ENCODE measurements at regions of chr12 and their contacts with region 1.

Region 1: GRCh38 chr12:120437754-120438494 is at the start of gene COX6A1:
- DNase-seq: peak; percentile 96 to 98
- ATAC-seq: peak; percentile 98 to 100
- H3K4me3 ChIP-seq: peak within 1 kb of the TSS; percentile 74 to 92 (median 84)
- H3K27ac ChIP-seq: peak within 1 kb of the TSS; percentile 82 to 98 (median 89)
- H3K4me1 ChIP-seq: peaks cover 16 to 21% of the 10 kb centered on the region in 2 donors
- H3K27me3 ChIP-seq: no peaks in the 10 kb centered on the region
- CTCF ChIP-seq: peak in 1 of 5 experiments; percentile 20
- POLR2A ChIP-seq: peak; percentile 61 to 72
- total RNA-seq, gene COX6A1: 46.9 to 90.8 (median 74.3) TPM

Region 2: GRCh38 chr12:120317224-120318105 is 120.5 kb before region 1 on chr12:
- in situ Hi-C with region 1: loop called in 1 of 4 experiments (anchors 10 kb)
- intact Hi-C with region 1: loop called (anchors 5 kb)
- DNase-seq: peak; percentile 99 to 100
- ATAC-seq: peak; percentile 99
- H3K4me3 ChIP-seq: peak overlapping the region; percentile 67 to 81 (median 73)
- H3K27ac ChIP-seq: peak overlapping the region; percentile 92 to 96 (median 94)
- H3K4me1 ChIP-seq: peaks cover 3 to 7% of the 10 kb centered on the region in 2 donors
- H3K27me3 ChIP-seq: no peaks in the 10 kb centered on the region
- CTCF ChIP-seq: peak; percentile 55 to 70 (median 62)
- POLR2A ChIP-seq: peak; percentile 78 to 86

Region 3: GRCh38 chr12:120327593-120327992 is 110.3 kb before region 1 on chr12 and contains the start of gene PLA2G1B:
- in situ Hi-C with region 1: loop called in 1 of 4 experiments (anchors 10 kb)
- intact Hi-C with region 1: loop called (anchors 5 kb)
- DNase-seq: no peak
- ATAC-seq: no peak
- H3K4me3 ChIP-seq: no peak within 1 kb of the TSS
- H3K27ac ChIP-seq: no peak within 1 kb of the TSS
- H3K4me1 ChIP-seq: peaks cover 0 to 5% of the 10 kb centered on the region in 2 donors
- H3K27me3 ChIP-seq: no peaks in the 10 kb centered on the region
- CTCF ChIP-seq: no peak
- POLR2A ChIP-seq: no peak
- total RNA-seq, gene PLA2G1B: not detected

Region 4: GRCh38 chr12:120469450-120470149 is 31.7 kb after region 1 on chr12 and contains the start of gene SRSF9:
- in situ Hi-C with region 1: no loop called
- intact Hi-C with region 1: loop called (anchors 2 kb)
- DNase-seq: peak; percentile 92 to 95
- ATAC-seq: peak; percentile 90 to 96
- H3K4me3 ChIP-seq: peak within 1 kb of the TSS; percentile 82 to 99 (median 90)
- H3K27ac ChIP-seq: peak within 1 kb of the TSS; percentile 87 to 93 (median 90)
- H3K4me1 ChIP-seq: peaks cover 15 to 32% of the 10 kb centered on the region in 2 donors
- H3K27me3 ChIP-seq: no peaks in the 10 kb centered on the region
- CTCF ChIP-seq: peak; percentile 85 to 96 (median 90)
- POLR2A ChIP-seq: peak; percentile 74 to 87
- total RNA-seq, gene SRSF9: 13.5 to 18.6 (median 16.0) TPM

Region 5: GRCh38 chr12:120495723-120496412 is 57.9 kb after region 1 on chr12 and contains the start of gene DYNLL1:
- in situ Hi-C with region 1: no loop called
- intact Hi-C with region 1: loop called (anchors 2 kb)
- DNase-seq: peak; percentile 92 to 96
- ATAC-seq: peak; percentile 98
- H3K4me3 ChIP-seq: peak within 1 kb of the TSS; percentile 66 to 100 (median 86)
- H3K27ac ChIP-seq: peak within 1 kb of the TSS; percentile 84 to 92 (median 85)
- H3K4me1 ChIP-seq: peaks cover 25 to 28% of the 10 kb centered on the region in 2 donors
- H3K27me3 ChIP-seq: no peaks in the 10 kb centered on the region
- CTCF ChIP-seq: peak in 1 of 5 experiments; percentile 25
- POLR2A ChIP-seq: peak; percentile 79 to 89
- total RNA-seq, gene DYNLL1: 16.7 to 45.0 (median 32.6) TPM

Region 6: GRCh38 chr12:120528861-120529525 is 91.1 kb after region 1 on chr12 and contains the start of gene COQ5:
- in situ Hi-C with region 1: no loop called
- intact Hi-C with region 1: loop called (anchors 2 kb)
- DNase-seq: peak; percentile 83 to 89
- ATAC-seq: peak; percentile 92 to 96
- H3K4me3 ChIP-seq: peak within 1 kb of the TSS; percentile 72 to 93 (median 87)
- H3K27ac ChIP-seq: peak within 1 kb of the TSS; percentile 89 to 97 (median 96)
- H3K4me1 ChIP-seq: peaks cover 5 to 9% of the 10 kb centered on the region in 2 donors
- H3K27me3 ChIP-seq: no peaks in the 10 kb centered on the region
- CTCF ChIP-seq: peak in 1 of 5 experiments; percentile 11
- POLR2A ChIP-seq: peak; percentile 27 to 47
- total RNA-seq, gene COQ5: 34.5 to 47.3 (median 39.2) TPM

Region 7: GRCh38 chr12:121015825-121016766 is 578.2 kb after region 1 on chr12 and contains the start of gene C12orf43:
- in situ Hi-C with region 1: no loop called
- intact Hi-C with region 1: loop called (anchors 2 kb)
- DNase-seq: peak; percentile 80 to 88
- ATAC-seq: peak; percentile 100
- H3K4me3 ChIP-seq: peak within 1 kb of the TSS; percentile 85 to 95 (median 88)
- H3K27ac ChIP-seq: peak within 1 kb of the TSS; percentile 76 to 85 (median 82)
- H3K4me1 ChIP-seq: peaks cover 9 to 10% of the 10 kb centered on the region in 2 donors
- H3K27me3 ChIP-seq: no peaks in the 10 kb centered on the region
- CTCF ChIP-seq: no peak
- POLR2A ChIP-seq: no peak
- total RNA-seq, gene C12orf43: 2.9 to 13.2 (median 5.1) TPM

Measured in gastrocnemius medialis (tissue), 4 donors.